ENCODE measurements at regions of chr5 and their contacts with region 1.

Region 1: DNA sequence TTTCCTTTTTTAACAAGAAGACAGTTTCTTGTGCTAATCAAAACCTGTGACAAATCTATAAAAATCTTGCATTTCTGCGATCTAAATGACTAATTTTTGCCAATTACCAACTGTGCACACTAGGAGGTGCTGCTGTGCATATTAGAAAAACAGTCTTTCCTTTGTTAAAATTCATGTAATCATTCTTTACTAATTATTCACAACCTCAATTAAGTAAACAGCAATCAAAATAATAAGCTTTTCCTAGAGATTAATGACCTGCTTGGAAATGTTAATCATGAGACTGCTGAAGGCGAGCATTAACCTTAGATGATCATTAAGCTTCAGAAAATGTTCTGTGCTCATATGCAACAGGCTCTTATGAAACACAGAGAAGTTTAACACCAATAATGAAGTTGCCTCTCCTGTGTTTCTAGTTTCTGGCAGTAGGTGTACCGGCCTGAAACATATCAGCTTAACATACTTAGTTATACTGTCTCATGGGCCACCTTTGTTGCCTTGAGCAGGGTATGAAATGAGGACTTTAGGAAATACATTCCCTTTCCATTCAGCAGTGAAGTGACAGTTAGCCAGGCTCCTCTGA is 17.7 kb downstream of the RFESD start:
- DNase-seq: peak; percentile 14
- H3K4me3 ChIP-seq: no peak overlapping the region
- H3K27me3 ChIP-seq: no peaks in the 10 kb centered on the region
- CTCF ChIP-seq: peak; percentile 77

Region 2: DNA sequence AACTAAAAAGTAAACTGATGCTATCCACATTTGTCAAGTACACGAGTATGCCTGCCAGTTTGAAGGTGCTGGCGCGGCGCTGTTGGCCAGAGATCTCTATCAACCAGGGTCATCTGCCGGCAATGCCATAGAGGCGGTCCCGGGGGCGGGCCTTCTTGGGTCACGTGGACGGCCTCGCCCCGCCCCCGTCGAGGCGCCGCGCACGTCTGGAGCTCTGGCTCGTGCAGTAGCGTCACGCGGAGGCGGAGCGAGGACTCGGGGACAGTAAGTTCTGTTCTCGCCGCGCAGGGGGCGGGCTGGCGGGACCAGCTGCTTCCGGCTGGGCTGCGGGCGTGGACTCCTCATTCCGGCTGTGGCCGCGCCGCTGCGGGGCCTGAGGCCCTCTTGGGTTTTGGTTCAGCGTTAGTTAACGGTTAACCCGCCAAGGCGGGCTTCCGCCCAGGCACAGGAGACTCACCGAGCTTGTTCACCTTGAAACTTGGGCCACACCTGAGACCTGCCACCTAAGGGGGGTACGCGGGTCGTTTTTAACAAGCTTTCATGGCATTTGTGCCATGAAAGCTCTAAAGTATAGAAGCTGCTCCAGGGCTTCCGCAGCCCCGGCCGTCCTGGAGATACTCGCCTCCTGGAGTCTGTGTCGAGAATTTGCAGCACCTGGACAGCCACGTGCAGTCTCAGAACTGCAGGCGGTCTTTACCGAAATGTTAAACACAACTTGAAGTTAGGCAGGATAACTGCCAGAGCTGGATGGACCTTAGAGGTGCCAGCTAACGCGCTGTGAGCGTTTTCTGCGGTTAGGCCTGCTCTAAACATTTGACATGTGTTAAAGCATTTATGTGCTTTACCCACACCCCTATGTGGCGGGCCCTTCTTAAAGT is 17.5 kb before region 1 on chr5 and contains the start of gene RFESD:
- CTCF ChIA-PET with region 1: interaction called, 14 read pairs
- POLR2A ChIA-PET with region 1: no interaction called
- DNase-seq: peak; percentile 72
- H3K4me3 ChIP-seq: peak within 1 kb of the TSS; percentile 55
- H3K27me3 ChIP-seq: no peaks in the 10 kb centered on the region
- CTCF ChIP-seq: 0 out of 2 replicates have a peak, but pooled peaks have one; percentile 3
- polyA plus RNA-seq, gene RFESD: 1.1 and 1.9 TPM in 2 replicates

Region 3: GRCh38 chr5:95686651-95687050 is 22.4 kb after region 1 on chr5:
- CTCF ChIA-PET with region 1: no interaction called
- POLR2A ChIA-PET with region 1: no interaction called
- DNase-seq: peak; percentile 7
- H3K4me3 ChIP-seq: no peak overlapping the region
- H3K27me3 ChIP-seq: no peaks in the 10 kb centered on the region
- CTCF ChIP-seq: no peak

Region 4: GRCh38 chr5:95730730-95731570 is 66.7 kb after region 1 on chr5 and contains the start of gene RHOBTB3:
- CTCF ChIA-PET with region 1: interaction called, 54 read pairs
- POLR2A ChIA-PET with region 1: no interaction called
- DNase-seq: peak; percentile 78
- H3K4me3 ChIP-seq: peak within 1 kb of the TSS; percentile 100
- H3K27me3 ChIP-seq: no peaks in the 10 kb centered on the region
- CTCF ChIP-seq: peak; percentile 20; the same call in 1 of the 2 replicates
- polyA plus RNA-seq, gene RHOBTB3: 288 and 320 TPM in 2 replicates

Region 5: DNA sequence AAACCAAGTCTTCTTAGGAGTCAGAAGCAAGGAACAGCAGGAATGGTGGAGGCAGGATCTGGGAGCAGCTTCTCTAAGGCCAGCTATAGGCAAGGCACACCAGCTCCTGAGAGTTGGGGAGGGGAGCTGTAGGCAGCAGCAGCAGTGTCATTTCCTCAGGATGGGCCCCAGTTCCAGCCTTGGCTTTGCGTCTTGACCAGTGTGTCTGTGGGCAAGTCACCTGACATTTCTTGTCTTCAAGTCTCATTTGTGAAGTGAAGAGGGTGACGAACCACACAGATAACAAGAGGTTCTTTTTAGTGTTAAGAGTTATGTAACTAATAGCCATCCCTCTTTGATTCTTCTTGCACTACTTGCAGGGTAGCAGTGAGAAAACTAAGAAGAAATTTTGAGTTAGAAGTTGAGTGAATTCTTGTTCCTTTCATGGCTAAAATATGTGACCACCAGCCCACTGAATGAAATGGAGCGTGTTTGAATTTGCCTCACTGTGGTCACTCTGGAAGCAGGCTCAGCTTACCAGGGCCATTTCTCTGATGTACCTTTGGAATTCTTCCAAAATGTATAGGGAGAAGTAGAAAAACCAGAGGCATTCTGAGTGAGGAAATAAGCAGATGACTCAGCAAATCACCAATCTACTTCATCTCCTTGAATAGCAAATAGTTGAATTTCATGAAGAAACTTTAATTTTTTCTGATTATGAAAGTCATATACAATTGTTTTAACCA is 109.2 kb after region 1 on chr5:
- CTCF ChIA-PET with region 1: interaction called, 11 read pairs
- POLR2A ChIA-PET with region 1: no interaction called
- DNase-seq: no peak
- H3K4me3 ChIP-seq: no peak overlapping the region
- H3K27me3 ChIP-seq: no peaks in the 10 kb centered on the region
- CTCF ChIP-seq: no peak

Region 6: GRCh38 chr5:95846554-95847260 is 182.4 kb after region 1 on chr5:
- CTCF ChIA-PET with region 1: interaction called, 10 read pairs
- POLR2A ChIA-PET with region 1: no interaction called
- DNase-seq: no peak
- H3K4me3 ChIP-seq: no peak overlapping the region
- H3K27me3 ChIP-seq: no peaks in the 10 kb centered on the region
- CTCF ChIP-seq: peak; percentile 88

Region 7: DNA sequence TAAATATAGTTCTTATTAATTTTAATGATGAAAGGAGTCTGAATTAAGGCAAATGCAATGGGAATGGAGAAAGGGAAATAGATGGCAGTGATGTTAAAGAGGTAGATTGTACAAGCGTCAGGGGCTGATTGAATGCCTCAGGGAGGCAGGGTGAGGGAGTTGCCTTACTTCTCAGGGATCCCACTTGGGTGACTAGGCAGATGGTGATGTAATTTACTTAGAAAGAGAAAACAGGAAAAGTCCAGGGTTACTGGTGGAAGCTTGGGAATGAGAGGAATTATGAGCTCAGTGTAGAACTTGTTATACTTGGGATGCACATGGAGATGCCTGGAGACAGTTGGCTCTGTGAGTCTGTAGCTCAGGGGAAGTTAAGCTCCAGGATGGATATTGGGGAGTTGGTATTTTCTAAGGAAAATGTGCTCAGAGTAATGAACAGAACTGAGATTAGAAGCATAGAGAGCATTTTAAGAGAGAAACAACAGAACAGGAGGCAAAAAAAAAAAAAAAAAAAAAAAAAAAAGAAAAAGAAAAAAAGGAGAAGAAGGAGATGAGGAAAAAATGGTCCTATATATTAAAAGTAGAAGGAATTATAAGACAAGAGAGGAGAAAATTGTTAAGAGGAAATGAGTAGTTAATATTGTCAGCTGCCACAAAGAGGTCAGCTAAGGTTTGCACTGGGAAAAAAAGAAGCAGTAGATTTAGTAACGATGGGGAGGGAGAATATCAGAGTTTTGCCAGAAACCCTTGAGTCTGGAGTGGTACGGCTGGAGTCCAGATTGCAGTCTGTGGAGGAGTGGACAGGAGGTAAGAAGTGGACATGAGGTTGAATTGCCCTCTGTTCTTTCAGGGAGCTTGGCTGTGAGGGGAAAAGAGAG is 385.3 kb after region 1 on chr5:
- CTCF ChIA-PET with region 1: no interaction called
- POLR2A ChIA-PET with region 1: no interaction called
- DNase-seq: peak; percentile 76
- H3K4me3 ChIP-seq: no peak overlapping the region
- H3K27me3 ChIP-seq: no peaks in the 10 kb centered on the region
- CTCF ChIP-seq: no peak